ENCODE measurements at regions of chr4 and their contacts with region 1.

Region 1: GRCh38 chr4:56655209-56655626 is 25.9 kb downstream of the HOPX start:
- DNase-seq: no peak
- H3K4me3 Mint-ChIP-seq: peak overlapping the region; percentile 81
- H3K27ac Mint-ChIP-seq: peak overlapping the region; percentile 84
- H3K4me1 Mint-ChIP-seq: peaks cover 63% of the 10 kb centered on the region
- H3K27me3 Mint-ChIP-seq: peaks cover 18% of the 10 kb centered on the region

Region 2: GRCh38 chr4:56757821-56758411 is 102.7 kb after region 1 on chr4:
- CTCF ChIA-PET with region 1: no interaction called
- POLR2A ChIA-PET with region 1: interaction called, 11 read pairs
- DNase-seq: peak; percentile 82
- H3K4me3 Mint-ChIP-seq: peak overlapping the region; percentile 63
- H3K27ac Mint-ChIP-seq: peak overlapping the region; percentile 97
- H3K4me1 Mint-ChIP-seq: peaks cover 47% of the 10 kb centered on the region
- H3K27me3 Mint-ChIP-seq: peaks cover 7% of the 10 kb centered on the region

Region 3: GRCh38 chr4:56907489-56908205 is 252.4 kb after region 1 on chr4 and contains the start of gene REST:
- CTCF ChIA-PET with region 1: no interaction called
- POLR2A ChIA-PET with region 1: interaction called, 12 read pairs
- DNase-seq: peak; percentile 83
- H3K4me3 Mint-ChIP-seq: peak within 1 kb of the TSS; percentile 79
- H3K27ac Mint-ChIP-seq: peak within 1 kb of the TSS; percentile 65
- H3K4me1 Mint-ChIP-seq: peaks cover 40% of the 10 kb centered on the region
- H3K27me3 Mint-ChIP-seq: peaks cover 5% of the 10 kb centered on the region
- total RNA-seq, gene REST: 54.7 to 58.3 TPM